ENCODE measurements at regions of chr4 and their contacts with region 1.

Region 1: DNA sequence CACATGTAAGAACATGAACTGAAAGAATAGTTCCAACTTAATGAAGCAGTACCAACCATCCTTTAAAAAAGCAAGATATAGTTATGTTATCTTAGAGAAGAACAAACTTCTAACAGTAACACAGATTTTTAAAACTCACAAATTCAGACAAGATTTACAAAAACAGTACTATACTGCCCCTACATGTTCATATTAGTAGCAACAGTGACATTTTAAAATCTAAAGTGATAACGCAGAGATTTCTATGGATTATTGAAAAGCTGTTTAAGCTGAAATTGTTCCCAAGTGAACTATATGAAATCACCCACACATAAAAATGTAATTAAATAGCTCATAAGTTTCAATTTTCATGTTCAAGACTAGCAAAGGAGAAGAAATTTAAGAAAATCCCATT is 166.0 kb downstream of the FBXW7 start:
- DNase-seq: no peak
- H3K4me3 ChIP-seq: no peak overlapping the region
- H3K27ac ChIP-seq: no peak overlapping the region
- H3K4me1 ChIP-seq: no peaks in the 10 kb centered on the region
- H3K27me3 ChIP-seq: no peaks in the 10 kb centered on the region
- CTCF ChIP-seq: peak; percentile 43 to 45

Region 2: GRCh38 chr4:151766700-151767099 is 603.2 kb before region 1 on chr4:
- CTCF ChIA-PET with region 1: no interaction called
- dilution Hi-C with region 1: no loop called
- in situ Hi-C with region 1: no loop called
- intact Hi-C with region 1: loop called (anchors 2 kb)
- DNase-seq: peak; percentile 19
- H3K4me3 ChIP-seq: no peak overlapping the region
- H3K27ac ChIP-seq: no peak overlapping the region
- H3K4me1 ChIP-seq: no peaks in the 10 kb centered on the region
- H3K27me3 ChIP-seq: no peaks in the 10 kb centered on the region
- CTCF ChIP-seq: peak; percentile 18 to 50